BJ (cell line): ENCODE measurements at regions of chr9 and their contacts with region 1.

Region 1: DNA sequence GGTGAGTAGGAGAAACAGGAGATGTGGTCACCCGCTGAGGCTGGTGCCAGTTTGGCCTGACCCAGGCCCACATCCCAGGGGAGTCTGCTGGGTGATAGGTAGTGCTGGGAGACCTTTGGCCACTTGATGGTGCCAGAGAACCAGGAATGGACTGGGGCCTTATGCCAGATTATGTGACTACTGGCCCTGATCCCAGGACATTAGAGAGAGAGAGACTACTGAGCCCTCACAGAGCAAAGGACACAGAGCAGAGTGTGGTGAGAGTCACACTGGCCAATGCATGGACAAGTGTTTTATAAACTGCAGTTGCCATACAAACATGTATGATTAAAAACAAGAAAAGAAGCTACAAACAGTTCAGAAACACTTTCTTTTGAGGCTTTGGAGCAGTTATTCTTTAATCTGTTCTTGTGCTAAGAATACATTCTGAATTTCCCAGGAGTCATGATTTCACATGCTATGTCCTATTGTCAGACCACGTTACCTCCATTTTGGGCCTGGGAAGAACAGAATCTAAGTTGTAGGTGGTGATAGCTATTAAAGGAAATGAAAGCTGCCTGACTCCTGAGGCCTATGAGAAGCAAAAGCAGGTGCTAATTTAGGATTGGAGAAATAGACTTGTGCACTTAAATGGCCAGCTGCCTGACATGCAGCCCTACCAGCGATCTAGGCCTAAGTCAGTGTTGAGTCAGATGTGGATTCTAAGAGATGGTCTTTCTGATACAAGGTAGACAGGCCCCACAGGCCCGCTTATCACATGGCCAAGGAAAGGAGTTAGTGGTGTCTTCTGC is 32.6 kb upstream of the TMOD1 start:
- DNase-seq: no peak
- H3K4me3 ChIP-seq: no peak overlapping the region
- H3K27me3 ChIP-seq: no peaks in the 10 kb centered on the region
- CTCF ChIP-seq: peak; percentile 84

Region 2: DNA sequence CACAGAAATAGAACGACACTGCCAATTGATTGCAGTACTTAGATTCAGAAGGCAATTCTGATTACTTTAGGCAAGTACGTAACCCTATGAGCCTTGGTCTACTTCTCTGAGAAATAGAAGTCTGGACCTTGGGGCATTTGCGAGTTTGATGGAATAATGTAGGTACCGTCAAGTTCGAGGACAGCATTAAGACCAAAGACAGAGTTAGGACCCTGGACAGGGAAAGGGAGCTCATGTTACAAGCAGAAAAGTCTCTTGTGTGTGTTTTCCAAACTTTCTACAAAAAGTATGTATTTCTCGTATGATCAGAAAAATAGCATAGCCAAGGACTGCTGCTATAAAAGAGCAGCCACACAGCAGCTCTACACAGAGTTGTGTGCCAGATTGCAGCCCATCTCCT is 141.3 kb before region 1 on chr9:
- CTCF ChIA-PET with region 1: no interaction called
- POLR2A ChIA-PET with region 1: no interaction called
- DNase-seq: no peak
- H3K4me3 ChIP-seq: no peak overlapping the region
- H3K27me3 ChIP-seq: no peaks in the 10 kb centered on the region
- CTCF ChIP-seq: no peak

Region 3: GRCh38 chr9:97445119-97445701 is 23.6 kb before region 1 on chr9:
- CTCF ChIA-PET with region 1: interaction called, 13 read pairs
- POLR2A ChIA-PET with region 1: no interaction called
- DNase-seq: no peak
- H3K4me3 ChIP-seq: no peak overlapping the region
- H3K27me3 ChIP-seq: no peaks in the 10 kb centered on the region
- CTCF ChIP-seq: no peak

Region 4: GRCh38 chr9:97484134-97484533 is 15.3 kb after region 1 on chr9:
- CTCF ChIA-PET with region 1: interaction called, 25 read pairs
- POLR2A ChIA-PET with region 1: interaction called, 6 read pairs
- DNase-seq: no peak
- H3K4me3 ChIP-seq: no peak overlapping the region
- H3K27me3 ChIP-seq: no peaks in the 10 kb centered on the region
- CTCF ChIP-seq: no peak

Region 5: GRCh38 chr9:97501177-97501971 is 32.5 kb after region 1 on chr9 and contains the start of gene TMOD1:
- CTCF ChIA-PET with region 1: interaction called, 21 read pairs
- POLR2A ChIA-PET with region 1: no interaction called
- DNase-seq: no peak
- H3K4me3 ChIP-seq: peak within 1 kb of the TSS; percentile 42
- H3K27me3 ChIP-seq: peaks cover 41% of the 10 kb centered on the region
- CTCF ChIP-seq: no peak
- polyA plus RNA-seq, gene TMOD1: 0.06 and 0.15 TPM in 2 replicates

Region 6: GRCh38 chr9:97591535-97591934 is 122.7 kb after region 1 on chr9:
- CTCF ChIA-PET with region 1: interaction called, 292 read pairs
- POLR2A ChIA-PET with region 1: no interaction called
- DNase-seq: no peak
- H3K4me3 ChIP-seq: no peak overlapping the region
- H3K27me3 ChIP-seq: no peaks in the 10 kb centered on the region
- CTCF ChIP-seq: no peak